GM12878 (cell line): ENCODE measurements at regions of chr1 and their contacts with region 1.

Region 1: DNA sequence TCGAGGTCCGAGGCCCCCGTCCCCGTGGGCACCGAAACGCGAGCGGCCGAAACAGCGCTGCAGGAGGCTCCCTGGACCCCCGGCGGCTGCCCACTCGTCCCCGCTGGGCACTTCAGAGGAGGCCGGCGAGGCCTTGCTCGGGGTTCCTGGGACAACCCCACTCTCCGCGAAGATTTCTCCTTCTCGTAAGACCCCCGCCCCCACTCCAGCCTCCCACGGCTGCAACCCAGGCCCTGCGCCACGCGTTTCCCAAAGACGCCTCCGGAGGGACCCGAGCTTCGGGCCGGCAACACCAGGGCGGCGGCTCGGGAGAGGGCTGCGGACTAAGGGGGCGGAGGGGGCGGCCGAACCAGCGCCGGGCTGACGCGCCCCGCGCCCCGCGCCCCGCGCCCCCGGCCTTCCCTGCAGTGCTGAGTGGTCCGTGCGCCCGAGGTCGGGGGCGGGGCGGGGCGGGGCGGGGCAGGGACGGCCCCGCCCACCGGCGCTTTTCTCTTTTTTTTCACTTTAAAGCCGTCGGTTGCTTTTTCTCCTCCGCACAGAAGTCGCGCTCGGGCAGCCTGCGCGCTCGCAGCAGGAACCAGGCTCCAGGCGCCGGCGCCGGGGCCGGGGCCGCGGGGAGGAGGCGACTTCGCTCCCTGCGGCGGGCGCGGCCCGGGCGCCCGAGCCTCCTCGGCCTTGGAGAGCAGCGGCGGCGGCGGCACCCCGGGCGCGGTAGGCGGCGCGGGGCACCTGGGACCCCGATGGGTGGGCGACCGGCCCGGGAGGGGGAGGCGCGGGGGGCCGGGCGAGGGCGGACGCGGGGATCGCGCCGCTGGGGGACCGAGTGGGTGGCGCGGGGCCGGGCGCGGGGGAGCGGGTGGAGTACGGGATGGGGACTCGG is at the start of gene SPSB1:
- DNase-seq: no peak
- ATAC-seq: peak; percentile 67
- H3K4me3 ChIP-seq: peak within 1 kb of the TSS; percentile 77
- H3K27ac ChIP-seq: no peak within 1 kb of the TSS
- H3K4me1 ChIP-seq: peaks cover 13% of the 10 kb centered on the region
- H3K27me3 ChIP-seq: peaks cover 3 to 7% of the 10 kb centered on the region in 2 experiments; a peak in 2 of 4 replicates
- CTCF ChIP-seq: no peak
- EP300 ChIP-seq: no peak
- POLR2A ChIP-seq: peak; percentile 76
- RAD21 ChIP-seq: 0 out of 2 replicates have a peak, but pooled peaks have one; percentile 7
- polyA plus RNA-seq, gene SPSB1: 0.02 TPM in 1 of 2 experiments, not detected in the other

Region 2: DNA sequence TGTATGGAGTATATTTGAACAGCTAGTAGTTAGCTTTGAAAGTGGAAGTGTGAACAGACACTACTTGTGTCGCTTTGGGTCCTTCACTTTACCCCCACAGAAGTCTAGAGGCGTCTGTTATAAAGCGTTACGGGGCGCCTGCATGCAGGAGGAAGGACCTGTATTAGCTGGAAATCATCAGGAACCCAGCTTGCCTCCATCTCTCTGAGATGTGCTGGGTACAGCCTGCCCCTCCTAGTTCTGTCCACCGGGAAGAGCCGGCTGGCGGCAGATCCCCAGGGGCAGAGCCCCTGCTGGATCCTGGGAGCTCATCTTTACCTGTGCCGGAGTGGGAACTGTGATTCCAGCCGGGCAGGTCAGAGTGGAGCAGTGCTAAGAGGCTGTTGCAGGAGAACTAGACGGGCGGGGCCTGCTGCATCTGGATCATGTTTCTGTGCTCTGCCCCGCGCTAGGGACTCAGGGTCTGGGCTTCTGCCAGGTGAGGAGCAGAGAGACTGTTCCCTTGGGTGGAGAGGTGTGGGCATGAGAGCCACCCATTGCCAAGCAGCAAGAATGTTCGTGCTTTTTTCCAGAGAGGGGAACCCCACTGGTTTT is 22.2 kb before region 1 on chr1:
- CTCF ChIA-PET with region 1: interaction called, 27 read pairs
- POLR2A ChIA-PET with region 1: no interaction called
- RAD21 ChIA-PET with region 1: interaction called, 19 read pairs
- SMC1A ChIA-PET with region 1: interaction called, 14 read pairs
- in situ Hi-C with region 1: no loop called
- intact Hi-C with region 1: no loop called
- DNase-seq: no peak
- ATAC-seq: no peak
- H3K4me3 ChIP-seq: no peak overlapping the region
- H3K27ac ChIP-seq: no peak overlapping the region
- H3K4me1 ChIP-seq: peaks cover 3% of the 10 kb centered on the region; the same call in 1 of the 2 replicates
- H3K27me3 ChIP-seq: no peaks in the 10 kb centered on the region
- CTCF ChIP-seq: no peak
- EP300 ChIP-seq: no peak
- POLR2A ChIP-seq: no peak
- RAD21 ChIP-seq: no peak

Region 3: DNA sequence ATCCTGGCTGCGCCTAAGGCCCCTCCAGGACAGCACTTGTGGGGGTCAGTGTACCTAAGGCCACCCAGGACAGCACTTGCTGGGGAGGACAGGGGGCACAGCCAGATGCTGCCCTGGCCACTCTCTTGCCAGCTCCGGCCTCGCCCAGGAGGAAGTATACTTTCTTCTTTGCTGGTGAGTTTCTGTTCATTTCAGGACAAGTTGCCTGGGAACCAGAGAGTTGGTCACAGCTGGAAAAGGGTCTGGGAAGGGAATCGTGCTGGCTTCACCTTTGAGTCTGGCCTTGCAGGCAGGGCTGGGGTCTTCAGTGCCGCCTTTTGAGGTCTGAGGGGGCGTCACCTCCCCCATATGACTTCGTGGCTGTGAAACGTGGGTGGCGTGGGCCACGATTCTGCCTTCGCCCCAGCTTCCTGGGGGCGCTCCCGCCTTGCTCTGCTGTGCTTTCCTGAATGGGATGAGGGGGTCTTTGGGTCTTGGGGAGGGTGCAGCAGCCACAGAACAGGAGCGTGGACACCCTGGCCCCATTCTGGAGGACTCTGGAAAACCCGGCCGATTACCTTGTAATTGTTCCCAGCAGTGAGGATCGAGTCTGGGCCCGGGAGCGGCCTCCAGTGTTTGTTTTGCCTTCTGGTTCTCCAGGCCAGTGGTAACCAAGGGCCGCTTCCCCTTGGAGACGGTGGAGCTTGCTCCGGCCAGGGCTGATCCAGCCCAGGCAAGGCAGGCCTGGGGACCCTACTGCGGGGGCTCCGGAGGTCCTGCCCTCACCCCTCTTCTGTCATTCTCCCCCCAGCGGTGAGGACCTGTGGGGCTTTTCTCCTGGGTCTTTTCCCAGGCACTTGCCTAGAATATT is 46.0 kb after region 1 on chr1:
- CTCF ChIA-PET with region 1: no interaction called
- POLR2A ChIA-PET with region 1: no interaction called
- RAD21 ChIA-PET with region 1: no interaction called
- SMC1A ChIA-PET with region 1: no interaction called
- in situ Hi-C with region 1: no loop called
- intact Hi-C with region 1: no loop called
- DNase-seq: no peak
- ATAC-seq: no peak
- H3K4me3 ChIP-seq: no peak overlapping the region
- H3K27ac ChIP-seq: no peak overlapping the region
- H3K4me1 ChIP-seq: no peaks in the 10 kb centered on the region
- H3K27me3 ChIP-seq: no peaks in the 10 kb centered on the region; a peak in 1 of 4 replicates
- CTCF ChIP-seq: no peak
- EP300 ChIP-seq: no peak
- POLR2A ChIP-seq: no peak
- RAD21 ChIP-seq: no peak

Region 4: GRCh38 chr1:9413148-9413876 is 120.7 kb after region 1 on chr1:
- CTCF ChIA-PET with region 1: interaction called, 3 read pairs
- POLR2A ChIA-PET with region 1: no interaction called
- RAD21 ChIA-PET with region 1: interaction called, 14 read pairs
- SMC1A ChIA-PET with region 1: interaction called, 10 read pairs
- in situ Hi-C with region 1: no loop called
- intact Hi-C with region 1: no loop called
- DNase-seq: peak; percentile 89
- ATAC-seq: peak; percentile 91
- H3K4me3 ChIP-seq: peak overlapping the region; percentile 26; the same call in 1 of the 2 replicates
- H3K27ac ChIP-seq: peak overlapping the region; percentile 90
- H3K4me1 ChIP-seq: peaks cover 56% of the 10 kb centered on the region
- H3K27me3 ChIP-seq: no peaks in the 10 kb centered on the region
- CTCF ChIP-seq: no peak
- EP300 ChIP-seq: peak; percentile 66 to 87
- POLR2A ChIP-seq: peak; percentile 59
- RAD21 ChIP-seq: 0 out of 2 replicates have a peak, but pooled peaks have one; percentile 23

Region 5: DNA sequence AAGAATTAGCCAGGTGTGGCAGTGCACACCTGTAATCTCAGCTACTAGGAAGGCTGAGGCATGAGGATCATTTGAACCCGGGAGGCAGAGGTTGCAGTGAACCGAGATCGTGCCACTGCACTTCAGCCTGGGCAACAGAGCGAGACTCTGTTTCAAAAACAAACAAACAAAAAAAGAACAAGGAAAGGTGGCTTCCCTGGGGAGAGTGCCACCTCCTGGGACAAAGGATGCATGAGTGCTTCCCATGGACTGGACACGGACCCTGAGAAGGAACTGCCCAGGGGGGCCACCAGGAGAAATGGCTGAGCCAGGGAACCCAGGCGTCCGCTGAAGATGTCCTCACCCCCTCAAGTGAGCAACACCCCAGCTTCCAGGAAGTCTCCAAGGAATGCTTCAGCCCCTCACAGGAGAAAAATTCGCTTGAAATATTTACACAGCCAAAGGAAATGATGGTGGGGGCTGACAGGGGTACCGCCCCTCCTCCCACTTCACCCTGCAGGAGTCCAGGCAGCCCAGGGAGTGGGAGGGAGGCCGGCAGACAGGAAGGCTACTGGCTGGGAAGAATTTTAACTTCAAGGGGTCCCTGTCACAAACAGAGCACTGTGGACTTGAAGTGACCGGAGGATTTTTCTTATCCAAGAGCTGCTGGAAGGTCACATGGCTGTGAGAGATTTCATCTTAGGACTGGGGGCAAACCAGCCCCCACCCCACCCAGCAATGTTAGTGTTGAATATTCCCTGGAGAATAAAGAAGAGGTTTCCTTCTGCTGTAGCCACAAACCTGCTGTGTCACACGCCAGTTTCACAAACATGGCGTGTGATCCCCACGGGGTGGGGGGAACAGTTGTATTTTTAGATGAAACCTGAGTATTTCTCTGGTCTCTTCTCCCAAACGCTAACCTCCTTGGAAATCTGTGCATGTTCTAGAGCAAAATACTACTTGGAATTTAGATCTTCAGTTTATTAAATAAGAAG is 155.8 kb after region 1 on chr1:
- CTCF ChIA-PET with region 1: interaction called, 183 read pairs
- POLR2A ChIA-PET with region 1: no interaction called
- RAD21 ChIA-PET with region 1: interaction called, 100 read pairs
- SMC1A ChIA-PET with region 1: interaction called, 123 read pairs
- in situ Hi-C with region 1: no loop called
- intact Hi-C with region 1: no loop called
- DNase-seq: no peak
- ATAC-seq: no peak
- H3K4me3 ChIP-seq: no peak overlapping the region
- H3K27ac ChIP-seq: no peak overlapping the region
- H3K4me1 ChIP-seq: 0 out of 2 replicates have a peak, but pooled peaks cover 3% of the 10 kb centered on the region
- H3K27me3 ChIP-seq: no peaks in the 10 kb centered on the region
- CTCF ChIP-seq: peak in 1 of 3 experiments; percentile 9; a peak in 1 of 6 replicates
- EP300 ChIP-seq: no peak
- POLR2A ChIP-seq: no peak
- RAD21 ChIP-seq: no peak

Region 6: GRCh38 chr1:9486466-9487140 is 194.0 kb after region 1 on chr1:
- CTCF ChIA-PET with region 1: interaction called, 123 read pairs
- POLR2A ChIA-PET with region 1: no interaction called
- RAD21 ChIA-PET with region 1: interaction called, 52 read pairs
- SMC1A ChIA-PET with region 1: interaction called, 63 read pairs
- in situ Hi-C with region 1: loop called (anchors 5 kb)
- intact Hi-C with region 1: loop called (anchors 1 kb)
- DNase-seq: no peak
- ATAC-seq: no peak
- H3K4me3 ChIP-seq: no peak overlapping the region
- H3K27ac ChIP-seq: no peak overlapping the region
- H3K4me1 ChIP-seq: 0 out of 2 replicates have a peak, but pooled peaks cover 5% of the 10 kb centered on the region
- H3K27me3 ChIP-seq: peaks cover 0 to 2% of the 10 kb centered on the region in 2 experiments; a peak in 1 of 4 replicates
- CTCF ChIP-seq: no peak
- EP300 ChIP-seq: no peak
- POLR2A ChIP-seq: no peak
- RAD21 ChIP-seq: no peak

Region 7: GRCh38 chr1:9573723-9574122 is 281.1 kb after region 1 on chr1:
- CTCF ChIA-PET with region 1: interaction called, 3 read pairs
- POLR2A ChIA-PET with region 1: no interaction called
- RAD21 ChIA-PET with region 1: no interaction called
- SMC1A ChIA-PET with region 1: interaction called, 5 read pairs
- in situ Hi-C with region 1: loop called (anchors 5 kb)
- intact Hi-C with region 1: loop called (anchors 5 kb)
- DNase-seq: no peak
- ATAC-seq: 0 out of 3 replicates have a peak, but pooled peaks have one; percentile 27
- H3K4me3 ChIP-seq: no peak overlapping the region
- H3K27ac ChIP-seq: no peak overlapping the region
- H3K4me1 ChIP-seq: no peaks in the 10 kb centered on the region
- H3K27me3 ChIP-seq: no peaks in the 10 kb centered on the region
- CTCF ChIP-seq: peak; percentile 21 to 39 (median 35); a peak in 4 of 6 replicates
- EP300 ChIP-seq: no peak
- POLR2A ChIP-seq: no peak
- RAD21 ChIP-seq: peak; percentile 60